Heart right ventricle (tissue), 16 donors: ENCODE measurements at regions of chr15 and their contacts with region 1.

Region 1: DNA sequence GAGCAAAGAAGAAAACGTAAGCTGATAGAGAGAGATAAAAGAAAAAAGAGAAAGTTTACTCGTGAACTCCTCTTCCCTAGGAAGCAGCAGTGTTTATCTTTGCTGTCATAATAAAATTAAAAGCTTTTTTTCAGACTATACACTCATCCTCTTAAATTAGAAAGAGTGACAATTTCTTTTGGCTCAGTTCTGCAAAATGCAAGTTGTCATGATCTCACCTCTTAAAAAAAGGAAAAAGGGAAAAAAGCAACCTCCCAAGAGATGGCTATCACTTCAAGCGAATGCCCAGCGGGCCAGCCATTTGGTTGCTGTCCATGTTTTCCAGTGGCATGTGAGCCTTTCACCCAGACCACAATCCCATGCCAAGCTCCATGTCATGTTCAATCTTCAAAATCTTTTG is 7.0 kb upstream of the THBS1 start:
- DNase-seq: no peak
- ATAC-seq: no peak
- H3K4me3 ChIP-seq: no peak overlapping the region
- H3K27ac ChIP-seq: no peak overlapping the region
- H3K4me1 ChIP-seq: peaks cover 0 to 7% (median under 1%) of the 10 kb centered on the region in 9 donors
- H3K27me3 ChIP-seq: no peaks in the 10 kb centered on the region
- CTCF ChIP-seq: no peak

Region 2: GRCh38 chr15:39125904-39126303 is 447.9 kb before region 1 on chr15:
- intact Hi-C with region 1: loop called in 1 of 10 experiments (anchors 5 kb)
- DNase-seq: no peak
- ATAC-seq: no peak
- H3K4me3 ChIP-seq: no peak overlapping the region
- H3K27ac ChIP-seq: no peak overlapping the region
- H3K4me1 ChIP-seq: peaks cover 3 to 40% (median 23%) of the 10 kb centered on the region in 9 donors
- H3K27me3 ChIP-seq: no peaks in the 10 kb centered on the region
- CTCF ChIP-seq: peak; percentile 24 to 66 (median 59)

Region 3: DNA sequence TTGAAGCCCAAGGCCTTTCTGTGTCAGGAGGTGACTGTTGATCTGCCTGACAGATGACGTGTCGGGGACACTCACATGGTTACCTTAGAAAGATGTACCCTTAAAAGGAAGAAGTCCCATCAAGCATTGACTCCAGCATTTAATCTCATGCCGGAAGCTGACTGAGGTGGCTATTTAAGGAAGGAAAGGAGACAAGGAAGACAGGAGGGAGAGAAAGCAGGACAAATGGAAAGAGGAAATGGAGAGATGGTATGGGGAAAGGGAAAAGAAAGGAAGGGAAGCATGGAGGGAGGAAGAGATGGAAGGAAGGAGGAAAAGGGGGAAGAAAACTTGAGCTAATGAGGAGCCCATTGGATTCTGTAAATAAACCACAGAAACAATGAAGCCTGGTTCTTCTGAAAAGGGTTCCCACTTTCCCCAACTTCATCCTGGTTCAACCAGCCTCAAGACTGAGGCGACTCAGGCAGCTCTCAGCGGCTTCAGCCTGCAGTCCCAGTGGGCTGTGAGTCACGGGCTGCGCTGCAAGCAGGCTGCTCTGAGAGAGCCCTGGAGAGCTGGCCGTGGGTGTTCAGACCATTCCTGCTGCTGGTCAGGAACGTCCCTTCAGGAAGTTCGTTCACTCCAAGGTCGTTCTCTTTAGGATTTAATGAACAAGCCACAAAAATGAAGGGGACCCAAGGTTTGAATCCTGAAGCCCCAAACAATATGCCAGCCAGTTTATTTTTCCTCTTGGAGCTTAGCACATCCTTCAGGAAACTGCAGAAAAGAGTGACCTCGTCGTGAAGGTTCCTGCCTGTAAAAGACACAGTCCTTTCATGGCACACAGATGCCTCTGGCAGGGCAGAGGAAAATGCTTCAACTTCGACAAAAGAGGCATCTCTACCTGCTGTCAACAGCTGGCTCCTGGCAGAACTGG is 62.6 kb before region 1 on chr15:
- intact Hi-C with region 1: loop called in 4 of 10 experiments (anchors 5 to 10 kb)
- DNase-seq: peak; percentile 63 to 76
- ATAC-seq: peak; percentile 78 to 94 (median 86)
- H3K4me3 ChIP-seq: no peak overlapping the region
- H3K27ac ChIP-seq: peak overlapping the region in 8 of 10 donors; percentile 20 to 83 (median 72)
- H3K4me1 ChIP-seq: peaks cover 0 to 33% (median 25%) of the 10 kb centered on the region in 9 donors
- H3K27me3 ChIP-seq: no peaks in the 10 kb centered on the region
- CTCF ChIP-seq: no peak

Region 4: DNA sequence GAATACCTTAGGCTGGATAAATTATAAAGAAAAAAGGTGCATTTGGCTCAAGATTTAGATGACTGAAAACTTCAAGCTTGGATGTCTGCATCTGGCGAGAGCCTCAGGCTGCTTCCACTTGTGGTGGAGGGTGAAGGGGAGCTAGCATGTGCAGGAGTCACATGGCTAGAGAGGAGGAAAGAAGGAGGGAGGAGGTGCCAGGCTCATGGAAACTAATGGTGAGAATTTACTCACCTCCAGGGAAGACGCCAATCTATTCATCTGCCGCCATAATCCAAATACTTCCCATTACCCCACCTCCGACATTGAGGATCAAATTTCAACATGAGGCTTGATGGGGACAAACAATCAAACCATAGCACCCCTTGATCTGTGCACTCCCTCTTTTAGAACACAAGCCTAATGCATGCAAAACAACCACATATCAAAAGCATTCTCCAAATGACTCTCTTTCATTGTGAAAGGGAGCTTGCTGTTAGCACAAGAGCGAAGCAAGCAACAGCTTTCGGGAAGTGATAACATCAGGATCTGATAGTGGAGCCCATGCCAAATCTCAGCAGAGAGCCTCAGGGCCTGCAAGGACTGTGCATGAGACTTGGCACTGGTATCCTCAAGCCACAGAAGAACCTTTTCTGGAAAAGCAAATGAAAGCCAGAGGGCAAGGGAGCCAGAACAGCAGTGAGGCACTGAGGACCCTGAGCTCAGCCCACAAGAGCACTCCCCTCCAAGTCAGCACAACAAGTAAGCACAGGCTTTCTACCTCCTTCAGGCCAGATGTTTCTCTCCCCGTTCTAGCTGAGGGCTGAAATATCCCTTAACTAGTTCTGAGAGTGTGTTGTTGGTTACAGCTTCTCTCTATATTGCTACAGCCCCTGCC is 43.1 kb before region 1 on chr15:
- intact Hi-C with region 1: no loop called
- DNase-seq: no peak
- ATAC-seq: no peak
- H3K4me3 ChIP-seq: no peak overlapping the region
- H3K27ac ChIP-seq: no peak overlapping the region
- H3K4me1 ChIP-seq: no peaks in the 10 kb centered on the region
- H3K27me3 ChIP-seq: no peaks in the 10 kb centered on the region
- CTCF ChIP-seq: no peak

Region 5: DNA sequence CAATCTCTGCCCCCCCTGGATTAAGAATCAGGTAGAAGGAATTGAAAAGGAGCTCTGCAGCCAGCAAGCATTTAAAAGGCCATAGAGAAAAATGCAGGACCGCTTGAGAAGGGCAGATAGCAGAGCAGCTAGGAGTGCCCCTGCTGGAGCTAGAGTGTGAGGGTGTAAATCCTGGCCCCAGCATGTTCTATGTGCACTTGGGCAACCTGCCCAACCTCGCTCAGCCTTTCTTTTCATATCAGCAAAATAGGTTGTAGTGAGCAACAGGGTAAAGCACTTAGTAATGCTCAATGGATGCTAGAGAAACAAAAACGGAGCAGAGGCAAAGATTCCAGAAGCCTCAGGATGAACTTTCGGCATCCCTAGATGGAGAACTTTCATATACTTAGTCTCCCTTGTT is 18.0 kb before region 1 on chr15:
- intact Hi-C with region 1: no loop called
- DNase-seq: no peak
- ATAC-seq: peak in 1 of 8 donors; percentile 42
- H3K4me3 ChIP-seq: no peak overlapping the region
- H3K27ac ChIP-seq: no peak overlapping the region
- H3K4me1 ChIP-seq: peaks cover 0 to 17% (median 0%) of the 10 kb centered on the region in 9 donors
- H3K27me3 ChIP-seq: no peaks in the 10 kb centered on the region
- CTCF ChIP-seq: no peak

Region 6: DNA sequence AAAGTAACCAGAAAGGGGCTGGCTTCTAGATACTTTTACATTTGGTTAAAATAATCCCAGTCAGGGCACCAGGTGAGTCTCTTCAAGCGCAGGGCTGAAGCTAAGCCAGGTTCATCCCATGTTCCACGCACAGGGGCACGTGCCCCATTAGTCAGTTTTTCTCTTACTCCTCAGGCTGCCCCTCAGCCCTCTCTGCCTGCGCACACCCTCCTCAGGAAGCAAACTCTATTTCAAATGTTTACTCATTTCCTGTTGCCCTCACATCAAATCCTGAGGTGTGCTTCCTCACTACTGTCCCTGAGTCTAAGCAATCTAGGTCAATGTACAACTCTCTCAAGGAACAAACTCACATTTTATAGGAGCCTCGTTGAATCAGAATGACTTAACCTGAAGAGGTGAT is 55.5 kb after region 1 on chr15:
- intact Hi-C with region 1: no loop called
- DNase-seq: no peak
- ATAC-seq: no peak
- H3K4me3 ChIP-seq: no peak overlapping the region
- H3K27ac ChIP-seq: peak overlapping the region in 9 of 10 donors; percentile 69 to 88 (median 81)
- H3K4me1 ChIP-seq: peaks cover 19 to 65% (median 42%) of the 10 kb centered on the region in 9 donors
- H3K27me3 ChIP-seq: no peaks in the 10 kb centered on the region
- CTCF ChIP-seq: no peak

Region 7: GRCh38 chr15:39704689-39705088 is 130.8 kb after region 1 on chr15:
- intact Hi-C with region 1: no loop called
- DNase-seq: no peak
- ATAC-seq: no peak
- H3K4me3 ChIP-seq: no peak overlapping the region
- H3K27ac ChIP-seq: no peak overlapping the region
- H3K4me1 ChIP-seq: no peaks in the 10 kb centered on the region
- H3K27me3 ChIP-seq: no peaks in the 10 kb centered on the region
- CTCF ChIP-seq: no peak